ENCODE measurements at regions of chr15 and their contacts with region 1.

Region 1: GRCh38 chr15:80870893-80871292 is 91.7 kb downstream of the CEMIP start:
- DNase-seq: no peak
- ATAC-seq: peak; percentile 61 to 69
- H3K4me3 ChIP-seq: no peak overlapping the region
- H3K27ac ChIP-seq: no peak overlapping the region
- H3K4me1 ChIP-seq: peaks cover 6% of the 10 kb centered on the region
- H3K27me3 ChIP-seq: no peaks in the 10 kb centered on the region

Region 2: GRCh38 chr15:80932989-80933388 is 62.1 kb after region 1 on chr15:
- intact Hi-C with region 1: loop called in 1 of 4 experiments (anchors 2 kb)
- DNase-seq: peak; percentile 85 to 91 (median 87)
- ATAC-seq: peak; percentile 75 to 91
- H3K4me3 ChIP-seq: no peak overlapping the region
- H3K27ac ChIP-seq: peak overlapping the region; percentile 11
- H3K4me1 ChIP-seq: peaks cover 10% of the 10 kb centered on the region
- H3K27me3 ChIP-seq: no peaks in the 10 kb centered on the region